ENCODE measurements at regions of chr22 and their contacts with region 1.

Region 1: GRCh38 chr22:30089655-30089974 is 9.4 kb downstream of the HORMAD2 start:
- DNase-seq: no peak
- H3K4me3 ChIP-seq: no peak overlapping the region
- CTCF ChIP-seq: no peak

Region 2: DNA sequence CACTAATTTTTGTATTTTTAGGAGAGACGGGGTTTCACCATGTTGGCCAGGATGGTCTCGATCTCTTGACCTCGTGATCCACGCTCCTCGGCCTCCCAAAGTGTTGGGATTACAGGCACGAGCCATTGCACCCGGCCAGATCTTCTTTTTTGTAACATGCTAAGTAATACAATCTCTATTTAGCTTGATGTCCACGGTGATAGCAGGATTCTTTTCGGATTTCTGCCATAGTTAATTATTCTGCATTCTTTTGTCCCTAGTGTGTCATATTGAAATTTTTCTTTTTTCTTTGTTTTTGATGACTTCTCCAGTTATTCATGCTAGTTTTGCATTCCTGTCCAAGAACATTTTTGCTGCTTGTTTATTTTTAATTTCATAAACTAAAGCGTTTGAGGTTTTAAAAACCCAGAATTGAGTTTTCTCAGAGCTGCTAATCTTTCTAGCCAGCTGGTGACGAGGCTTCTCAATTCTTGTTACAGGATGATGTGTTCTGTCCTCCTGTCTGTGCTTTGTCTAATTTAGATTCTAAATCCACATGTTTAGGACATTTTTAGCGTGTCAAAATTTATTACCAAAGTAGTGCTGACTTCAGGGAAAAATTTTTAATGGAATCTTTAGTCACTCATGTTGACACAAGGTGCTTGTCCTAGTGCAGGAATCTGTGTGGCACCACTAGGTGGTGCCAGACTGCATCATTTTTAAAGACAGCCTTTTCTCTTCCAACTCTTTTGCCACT is 464.4 kb before region 1 on chr22:
- CTCF ChIA-PET with region 1: interaction called, 33 read pairs
- POLR2A ChIA-PET with region 1: no interaction called
- DNase-seq: no peak
- H3K4me3 ChIP-seq: no peak overlapping the region
- CTCF ChIP-seq: peak; percentile 63

Region 3: DNA sequence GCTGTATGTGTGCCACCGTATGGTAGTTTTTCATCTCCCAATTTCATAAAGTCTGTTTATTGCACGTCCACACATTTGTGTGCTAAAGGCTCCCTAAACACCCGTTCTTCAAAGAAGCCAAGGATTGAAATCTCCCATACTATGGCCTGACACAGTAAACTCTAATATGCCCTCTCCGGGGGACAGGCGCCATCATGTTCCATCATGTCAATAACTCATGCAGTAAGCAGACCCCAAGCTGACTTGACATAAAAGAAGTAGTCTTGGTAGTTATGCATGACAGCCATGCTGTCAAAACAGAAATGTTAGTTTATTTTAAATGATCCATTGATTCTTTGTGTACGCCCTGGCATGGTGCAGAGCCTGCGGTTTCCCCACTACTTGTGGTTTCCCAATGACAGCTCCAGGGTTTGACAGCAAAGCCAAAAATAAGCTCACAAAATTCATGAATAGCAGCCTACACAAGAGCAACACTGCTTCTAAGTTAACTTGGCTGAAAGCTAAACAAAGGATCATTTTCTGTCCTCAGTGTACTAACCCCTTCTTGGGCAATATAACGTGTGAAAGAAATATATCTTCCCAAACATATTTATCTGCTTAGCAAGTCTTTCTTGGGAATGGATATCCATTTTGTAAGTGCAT is 426.3 kb before region 1 on chr22:
- CTCF ChIA-PET with region 1: interaction called, 10 read pairs
- POLR2A ChIA-PET with region 1: no interaction called
- DNase-seq: no peak
- H3K4me3 ChIP-seq: no peak overlapping the region
- CTCF ChIP-seq: no peak

Region 4: GRCh38 chr22:29689880-29690213 is 399.8 kb before region 1 on chr22:
- CTCF ChIA-PET with region 1: interaction called, 65 read pairs
- POLR2A ChIA-PET with region 1: no interaction called
- DNase-seq: no peak
- H3K4me3 ChIP-seq: no peak overlapping the region
- CTCF ChIP-seq: peak; percentile 85

Region 5: DNA sequence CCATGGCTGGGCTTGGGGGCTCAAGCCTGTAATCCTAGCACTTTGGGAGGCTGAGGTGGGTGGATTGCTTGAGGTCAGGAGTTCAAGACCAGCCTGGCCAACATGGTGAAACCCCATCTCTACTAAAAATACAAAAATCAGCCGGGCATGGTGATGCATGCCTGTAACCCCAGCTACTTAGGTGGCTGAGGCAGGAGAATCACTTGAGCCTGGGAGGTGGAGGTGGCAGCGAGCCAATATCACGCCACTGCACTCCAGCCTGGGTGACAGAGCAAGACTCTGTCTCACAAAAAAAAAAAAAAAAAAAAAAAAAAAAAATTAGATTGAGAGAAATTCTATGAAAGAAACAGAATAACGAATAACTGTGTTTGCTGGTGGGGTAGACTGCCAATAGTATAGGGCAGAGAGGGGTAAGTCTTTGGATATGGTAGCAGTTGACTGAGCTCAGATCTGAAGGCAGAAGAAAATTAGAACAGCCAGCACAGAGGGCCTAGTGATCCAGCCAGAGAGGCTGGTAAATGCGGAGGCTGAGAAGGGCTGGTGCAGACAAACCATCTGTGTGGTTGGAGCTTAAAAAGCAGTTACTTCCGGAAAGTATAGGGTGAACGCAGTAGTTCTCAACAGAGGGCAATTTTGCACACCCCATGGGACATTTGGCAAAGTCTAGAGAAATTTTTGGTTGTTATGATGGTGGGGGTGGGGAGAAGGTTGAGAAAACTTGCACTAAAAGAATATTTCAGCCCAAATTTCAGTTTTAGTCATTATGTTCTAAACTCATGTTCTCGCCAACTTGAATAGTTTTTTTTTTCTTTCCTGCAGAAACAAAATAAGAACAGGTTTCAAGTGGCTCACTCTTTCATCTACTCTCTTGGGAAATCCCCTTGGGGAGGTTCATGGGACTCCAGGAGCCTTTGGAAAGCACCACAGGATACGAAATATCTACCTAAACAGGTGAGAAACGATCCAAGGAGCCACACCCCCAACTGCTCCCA is 11.0 kb before region 1 on chr22:
- CTCF ChIA-PET with region 1: interaction called, 35 read pairs
- POLR2A ChIA-PET with region 1: no interaction called
- DNase-seq: no peak
- H3K4me3 ChIP-seq: no peak overlapping the region
- CTCF ChIP-seq: no peak

Measured in AG04449 (cell line).